WTC11 (cell line): ENCODE measurements at regions of chr10 and their contacts with region 1.

Region 1: DNA sequence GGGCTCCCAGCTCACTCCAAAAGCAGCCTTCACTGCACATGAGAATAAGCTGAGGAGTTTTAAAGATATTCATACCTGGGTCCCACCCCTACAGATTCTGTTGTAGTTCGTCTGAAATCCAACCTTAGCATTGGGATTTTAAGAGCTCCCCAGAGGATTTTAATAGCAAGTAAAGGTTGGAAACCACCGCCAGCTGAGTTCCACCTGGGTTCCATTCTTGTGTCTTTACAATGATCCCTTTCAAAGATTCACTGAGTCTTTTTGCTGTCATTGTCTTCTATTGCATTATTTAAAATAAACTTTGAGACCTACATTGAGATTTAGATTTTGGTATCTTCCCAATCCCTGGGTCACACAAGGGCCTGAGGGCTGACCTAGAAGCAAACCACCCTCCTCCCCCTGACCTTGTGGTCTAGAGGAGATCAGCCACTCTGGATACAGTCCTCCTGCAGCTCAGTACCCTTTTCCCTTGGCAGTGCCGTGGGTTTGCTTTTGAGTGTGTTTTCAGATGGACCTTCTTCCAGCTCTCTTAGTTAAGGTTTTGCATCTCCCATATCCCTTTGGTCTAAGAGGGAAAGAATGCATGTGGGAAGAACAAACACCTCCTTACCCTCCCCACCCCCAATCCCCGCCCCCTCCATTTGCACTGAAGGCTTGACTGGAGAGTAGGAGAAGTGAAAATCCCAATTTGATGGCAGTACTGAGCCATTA is 22.6 kb upstream of the SIRT1 start:
- DNase-seq: peak; percentile 38
- ATAC-seq: peak; percentile 89
- H3K4me3 Mint-ChIP-seq: peak overlapping the region; percentile 55
- H3K27ac Mint-ChIP-seq: peak overlapping the region; percentile 95
- H3K4me1 Mint-ChIP-seq: peaks cover 48% of the 10 kb centered on the region
- H3K27me3 Mint-ChIP-seq: no peaks in the 10 kb centered on the region
- CTCF ChIP-seq: no peak

Region 2: DNA sequence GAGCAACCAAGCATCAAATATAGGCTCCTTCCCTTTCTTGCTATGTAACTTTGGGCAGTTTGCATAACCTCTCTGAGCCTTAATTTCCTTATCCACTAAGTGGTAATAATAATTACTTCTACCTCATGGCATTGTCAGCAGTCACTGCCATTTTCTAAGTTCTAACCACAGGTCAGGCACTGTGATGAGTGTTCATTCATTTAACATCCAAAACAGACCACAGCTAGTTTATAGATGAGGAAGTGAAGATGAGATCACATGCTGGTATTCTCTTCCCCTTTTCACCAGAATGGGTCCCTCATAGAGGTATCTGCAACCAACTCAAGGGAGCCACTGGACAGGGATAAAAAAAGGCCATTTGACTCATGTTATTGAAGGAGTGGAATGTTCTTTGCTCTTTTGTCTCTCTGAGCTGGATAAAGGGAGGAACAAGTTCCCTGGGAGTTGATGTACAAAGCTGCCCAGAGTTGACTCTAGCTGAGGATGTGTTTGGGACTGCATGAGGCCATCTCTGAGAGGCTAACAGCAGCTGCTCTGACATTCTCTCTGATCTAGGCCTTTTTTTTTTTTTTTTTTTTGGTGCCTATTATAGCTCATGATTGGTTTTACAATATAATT is 88.9 kb before region 1 on chr10:
- CTCF ChIA-PET with region 1: no interaction called
- POLR2A ChIA-PET with region 1: no interaction called
- DNase-seq: no peak
- ATAC-seq: no peak
- H3K4me3 Mint-ChIP-seq: no peak overlapping the region
- H3K27ac Mint-ChIP-seq: no peak overlapping the region
- H3K4me1 Mint-ChIP-seq: peaks cover 10% of the 10 kb centered on the region
- H3K27me3 Mint-ChIP-seq: no peaks in the 10 kb centered on the region
- CTCF ChIP-seq: no peak

Region 3: DNA sequence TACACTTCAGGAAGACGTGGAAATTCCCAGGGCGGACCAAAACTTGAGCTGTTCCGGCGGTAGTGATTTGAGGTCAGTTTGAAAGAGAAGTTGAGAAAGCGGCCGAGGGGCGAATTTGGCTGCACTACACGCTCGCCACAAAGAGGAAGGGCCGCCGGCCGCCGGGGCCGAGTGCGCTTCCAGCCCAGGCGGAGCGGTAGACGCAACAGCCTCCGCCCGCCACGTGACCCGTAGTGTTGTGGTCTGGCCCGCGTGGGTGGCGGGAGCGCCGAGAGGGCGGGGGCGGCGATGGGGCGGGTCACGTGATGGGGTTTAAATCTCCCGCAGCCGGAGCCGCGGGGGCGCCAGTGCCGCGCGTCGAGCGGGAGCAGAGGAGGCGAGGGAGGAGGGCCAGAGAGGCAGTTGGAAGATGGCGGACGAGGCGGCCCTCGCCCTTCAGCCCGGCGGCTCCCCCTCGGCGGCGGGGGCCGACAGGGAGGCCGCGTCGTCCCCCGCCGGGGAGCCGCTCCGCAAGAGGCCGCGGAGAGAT is 22.5 kb after region 1 on chr10 and contains the start of gene SIRT1:
- CTCF ChIA-PET with region 1: interaction called, 4 read pairs
- POLR2A ChIA-PET with region 1: interaction called, 20 read pairs
- DNase-seq: peak; percentile 96
- ATAC-seq: peak; percentile 87
- H3K4me3 Mint-ChIP-seq: peak within 1 kb of the TSS; percentile 91
- H3K27ac Mint-ChIP-seq: peak within 1 kb of the TSS; percentile 96
- H3K4me1 Mint-ChIP-seq: peaks cover 20% of the 10 kb centered on the region
- H3K27me3 Mint-ChIP-seq: no peaks in the 10 kb centered on the region
- CTCF ChIP-seq: no peak
- total RNA-seq, gene SIRT1: 51.3 to 55.5 TPM (median 53.9 TPM) in 3 replicates

Region 4: GRCh38 chr10:68156373-68157185 is 294.7 kb after region 1 on chr10:
- CTCF ChIA-PET with region 1: interaction called, 40 read pairs
- POLR2A ChIA-PET with region 1: no interaction called
- DNase-seq: peak; percentile 62
- ATAC-seq: peak; percentile 52
- H3K4me3 Mint-ChIP-seq: no peak overlapping the region
- H3K27ac Mint-ChIP-seq: no peak overlapping the region
- H3K4me1 Mint-ChIP-seq: peaks cover 42% of the 10 kb centered on the region
- H3K27me3 Mint-ChIP-seq: no peaks in the 10 kb centered on the region
- CTCF ChIP-seq: peak; percentile 63